Mammary epithelial cell (primary cell): ENCODE measurements at regions of chr1 and their contacts with region 1.

Region 1: DNA sequence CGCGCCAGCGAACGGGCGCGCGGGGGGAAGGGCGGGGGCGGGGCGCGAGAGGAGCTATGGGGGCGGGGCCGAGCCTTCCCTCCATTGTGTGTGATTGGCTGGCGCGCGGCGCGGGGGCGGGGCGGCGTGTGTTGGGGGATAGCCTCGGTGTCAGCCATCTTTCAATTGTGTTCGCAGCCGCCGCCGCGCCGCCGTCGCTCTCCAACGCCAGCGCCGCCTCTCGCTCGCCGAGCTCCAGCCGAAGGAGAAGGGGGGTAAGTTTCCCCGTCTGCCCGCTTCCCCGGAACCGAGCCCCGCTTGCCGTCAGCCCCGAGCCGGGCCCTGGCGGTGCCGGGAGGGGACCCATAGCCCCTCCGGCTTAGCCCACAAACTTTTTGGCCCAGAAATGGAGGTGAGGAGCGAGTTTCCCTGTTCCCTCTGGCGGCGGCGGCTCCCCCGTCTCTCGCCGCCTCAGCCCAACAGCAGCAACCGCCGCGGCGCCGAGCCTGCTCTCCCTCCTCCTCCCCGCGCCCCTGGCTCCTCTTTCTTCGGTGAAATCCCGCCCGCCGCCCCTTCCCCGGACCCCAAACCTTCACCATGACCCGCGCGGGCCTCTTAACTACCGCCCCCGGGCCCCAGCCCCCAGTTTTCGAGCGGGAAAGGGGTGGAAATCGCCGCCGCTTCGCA is at the start of gene H3-3A:
- DNase-seq: peak; percentile 92
- H3K4me3 ChIP-seq: peak within 1 kb of the TSS; percentile 86 to 99 (median 91)
- H3K27ac ChIP-seq: peak within 1 kb of the TSS; percentile 86
- H3K4me1 ChIP-seq: peaks cover 19% of the 10 kb centered on the region
- H3K27me3 ChIP-seq: no peaks in the 10 kb centered on the region
- CTCF ChIP-seq: peak in 1 of 2 donors; percentile 13
- total RNA-seq, gene H3-3A: 209 to 262 TPM

Region 2: GRCh38 chr1:225677350-225678124 is 385.2 kb before region 1 on chr1:
- CTCF ChIA-PET with region 1: no interaction called
- dilution Hi-C with region 1: no loop called
- in situ Hi-C with region 1: no loop called
- intact Hi-C with region 1: no loop called
- DNase-seq: no peak
- H3K4me3 ChIP-seq: peak overlapping the region in 1 of 3 experiments; percentile 4
- H3K27ac ChIP-seq: no peak overlapping the region
- H3K4me1 ChIP-seq: no peaks in the 10 kb centered on the region
- H3K27me3 ChIP-seq: no peaks in the 10 kb centered on the region
- CTCF ChIP-seq: no peak

Region 3: GRCh38 chr1:225834417-225835329 is 228.0 kb before region 1 on chr1:
- CTCF ChIA-PET with region 1: no interaction called
- dilution Hi-C with region 1: no loop called
- in situ Hi-C with region 1: no loop called
- intact Hi-C with region 1: loop called (anchors 5 kb)
- DNase-seq: no peak
- H3K4me3 ChIP-seq: no peak overlapping the region
- H3K27ac ChIP-seq: no peak overlapping the region
- H3K4me1 ChIP-seq: no peaks in the 10 kb centered on the region
- H3K27me3 ChIP-seq: no peaks in the 10 kb centered on the region
- CTCF ChIP-seq: no peak

Region 4: DNA sequence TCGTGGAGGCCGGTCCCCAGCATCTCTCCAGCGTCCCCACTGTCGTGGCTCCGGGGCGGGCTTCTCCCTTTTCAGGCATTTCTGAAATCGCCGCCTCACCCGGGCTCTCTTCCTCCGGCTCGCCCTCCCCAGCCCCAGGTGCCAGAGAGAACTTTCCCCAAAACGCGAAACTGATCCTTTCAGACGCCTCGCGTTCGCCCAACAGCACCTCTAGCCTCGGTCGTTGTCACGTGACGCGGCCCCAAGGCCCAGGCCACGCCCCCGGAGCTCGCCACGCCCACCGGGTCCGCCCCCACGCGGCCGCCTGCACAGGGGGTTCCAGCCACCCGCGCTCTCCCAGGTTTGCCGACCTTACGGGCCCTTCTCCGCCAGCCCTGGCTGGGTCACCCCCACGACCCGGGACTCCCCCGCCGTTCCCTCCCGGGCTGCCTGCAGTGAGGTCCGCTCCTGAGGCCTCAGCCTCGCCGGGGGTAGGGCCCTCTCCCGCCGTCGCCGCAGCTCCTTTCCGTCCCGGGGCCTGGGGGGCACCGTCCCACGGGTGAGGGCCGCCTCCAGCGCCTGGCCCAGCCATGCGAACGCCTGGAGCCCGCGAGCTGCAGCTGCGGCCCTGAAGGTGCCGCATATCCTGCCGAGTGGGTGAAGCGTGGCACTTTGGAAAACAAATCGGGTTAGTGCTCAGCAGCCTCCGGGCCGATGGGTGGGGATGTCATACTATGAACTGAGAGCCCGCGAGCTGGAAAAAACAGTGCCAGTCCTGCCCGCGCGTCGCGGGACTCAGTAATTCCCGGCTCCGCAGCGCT is 20.8 kb after region 1 on chr1:
- CTCF ChIA-PET with region 1: no interaction called
- dilution Hi-C with region 1: no loop called
- in situ Hi-C with region 1: no loop called
- intact Hi-C with region 1: loop called (anchors 1 kb)
- DNase-seq: peak; percentile 75
- H3K4me3 ChIP-seq: peak overlapping the region; percentile 47 to 75 (median 58)
- H3K27ac ChIP-seq: no peak overlapping the region
- H3K4me1 ChIP-seq: peaks cover 7% of the 10 kb centered on the region
- H3K27me3 ChIP-seq: no peaks in the 10 kb centered on the region
- CTCF ChIP-seq: peak in 1 of 2 donors; percentile 2

Region 5: DNA sequence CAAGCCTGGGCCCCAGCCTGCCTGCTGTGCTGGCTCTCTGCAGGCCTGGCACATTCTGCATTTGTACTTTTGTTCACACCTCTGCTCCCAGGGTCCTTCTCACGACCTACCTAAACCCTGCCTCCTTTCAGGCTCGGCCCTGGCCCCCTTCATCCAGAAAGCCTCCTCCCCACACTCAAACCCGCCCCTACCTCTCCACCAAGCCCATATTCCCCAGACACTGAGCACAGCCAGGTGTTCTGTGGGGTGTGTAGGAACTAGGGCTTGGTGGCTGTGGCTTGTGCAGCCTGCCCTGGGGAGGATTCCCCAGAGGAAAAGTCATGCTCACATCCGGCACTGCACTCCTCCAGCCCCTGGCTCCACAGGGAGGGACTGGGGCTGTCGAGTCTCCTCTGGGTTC is 152.5 kb after region 1 on chr1:
- CTCF ChIA-PET with region 1: no interaction called
- dilution Hi-C with region 1: no loop called
- in situ Hi-C with region 1: no loop called
- intact Hi-C with region 1: no loop called
- DNase-seq: no peak
- H3K4me3 ChIP-seq: no peak overlapping the region
- H3K27ac ChIP-seq: no peak overlapping the region
- H3K4me1 ChIP-seq: peaks cover 12% of the 10 kb centered on the region
- H3K27me3 ChIP-seq: no peaks in the 10 kb centered on the region
- CTCF ChIP-seq: no peak